GM12878 (cell line): ENCODE measurements at regions of chr19 and their contacts with region 1.

Region 1: GRCh38 chr19:46661020-46661731 is at the start of gene DACT3:
- DNase-seq: peak; percentile 99
- ATAC-seq: peak; percentile 97
- H3K4me3 ChIP-seq: peak within 1 kb of the TSS; percentile 59
- H3K27ac ChIP-seq: no peak within 1 kb of the TSS; the same call in 1 of the 2 replicates
- H3K4me1 ChIP-seq: peaks cover 22% of the 10 kb centered on the region
- H3K27me3 ChIP-seq: peaks cover 3% of the 10 kb centered on the region in 2 experiments; a peak in 3 of 4 replicates
- CTCF ChIP-seq: no peak
- EP300 ChIP-seq: no peak
- POLR2A ChIP-seq: no peak
- RAD21 ChIP-seq: no peak
- polyA plus RNA-seq, gene DACT3: 0.11 to 0.16 TPM

Region 2: GRCh38 chr19:46600384-46601317 is 60.5 kb before region 1 on chr19:
- CTCF ChIA-PET with region 1: interaction called, 38 read pairs
- POLR2A ChIA-PET with region 1: interaction called, 12 read pairs
- RAD21 ChIA-PET with region 1: interaction called, 47 read pairs
- SMC1A ChIA-PET with region 1: interaction called, 25 read pairs
- in situ Hi-C with region 1: no loop called
- intact Hi-C with region 1: no loop called
- DNase-seq: peak; percentile 85
- ATAC-seq: peak; percentile 81
- H3K4me3 ChIP-seq: peak overlapping the region; percentile 72
- H3K27ac ChIP-seq: peak overlapping the region; percentile 98
- H3K4me1 ChIP-seq: peaks cover 12% of the 10 kb centered on the region
- H3K27me3 ChIP-seq: no peaks in the 10 kb centered on the region
- CTCF ChIP-seq: no peak
- EP300 ChIP-seq: peak in 1 of 2 experiments; percentile 17; a peak in 1 of 4 replicates
- POLR2A ChIP-seq: peak; percentile 91
- RAD21 ChIP-seq: no peak

Region 3: GRCh38 chr19:46624958-46625661 is 36.1 kb before region 1 on chr19 and contains the start of gene PTGIR:
- CTCF ChIA-PET with region 1: interaction called, 434 read pairs
- POLR2A ChIA-PET with region 1: interaction called, 30 read pairs
- RAD21 ChIA-PET with region 1: interaction called, 245 read pairs
- SMC1A ChIA-PET with region 1: interaction called, 286 read pairs
- in situ Hi-C with region 1: no loop called
- intact Hi-C with region 1: no loop called
- DNase-seq: no peak
- ATAC-seq: peak; percentile 70
- H3K4me3 ChIP-seq: peak within 1 kb of the TSS; percentile 71
- H3K27ac ChIP-seq: peak within 1 kb of the TSS; percentile 62
- H3K4me1 ChIP-seq: peaks cover 36% of the 10 kb centered on the region
- H3K27me3 ChIP-seq: no peaks in the 10 kb centered on the region
- CTCF ChIP-seq: no peak
- EP300 ChIP-seq: no peak
- POLR2A ChIP-seq: peak; percentile 62
- RAD21 ChIP-seq: no peak
- polyA plus RNA-seq, gene PTGIR: 0.34 to 1.5 TPM

Region 4: DNA sequence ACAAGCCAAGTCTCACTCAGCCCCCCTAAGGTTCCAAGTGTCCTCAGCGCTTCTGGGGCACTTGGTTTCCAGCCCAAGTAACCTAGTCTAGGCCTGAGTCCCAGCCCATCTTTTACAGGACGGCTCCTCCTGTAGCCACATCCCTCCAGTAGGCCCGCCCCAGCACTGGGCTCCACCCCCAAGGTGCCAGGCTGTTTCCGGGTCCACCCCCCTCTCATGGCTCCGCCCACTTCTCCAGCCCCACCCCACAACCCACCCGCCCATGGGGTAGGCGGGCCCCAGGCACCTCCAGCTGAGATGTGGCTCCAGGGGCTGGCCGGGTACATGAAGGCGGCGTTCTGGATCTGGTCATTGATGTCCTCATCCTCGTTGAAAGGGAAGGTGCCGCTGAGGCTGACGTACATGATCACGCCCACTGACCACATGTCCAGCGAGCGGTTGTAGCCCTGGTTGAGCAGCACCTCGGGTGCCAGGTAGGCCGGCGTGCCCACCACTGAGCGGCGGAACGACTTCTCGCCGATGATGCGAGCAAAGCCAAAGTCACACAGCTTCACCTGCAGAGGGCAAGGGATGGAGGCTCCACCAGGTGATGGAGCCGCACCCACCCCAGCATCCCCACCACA is 17.0 kb after region 1 on chr19:
- CTCF ChIA-PET with region 1: interaction called, 16 read pairs
- POLR2A ChIA-PET with region 1: no interaction called
- RAD21 ChIA-PET with region 1: interaction called, 6 read pairs
- SMC1A ChIA-PET with region 1: no interaction called
- in situ Hi-C with region 1: no loop called
- intact Hi-C with region 1: no loop called
- DNase-seq: no peak
- ATAC-seq: peak; percentile 99
- H3K4me3 ChIP-seq: no peak overlapping the region
- H3K27ac ChIP-seq: no peak overlapping the region
- H3K4me1 ChIP-seq: no peaks in the 10 kb centered on the region
- H3K27me3 ChIP-seq: no peaks in the 10 kb centered on the region
- CTCF ChIP-seq: no peak
- EP300 ChIP-seq: no peak
- POLR2A ChIP-seq: no peak
- RAD21 ChIP-seq: no peak

Region 5: DNA sequence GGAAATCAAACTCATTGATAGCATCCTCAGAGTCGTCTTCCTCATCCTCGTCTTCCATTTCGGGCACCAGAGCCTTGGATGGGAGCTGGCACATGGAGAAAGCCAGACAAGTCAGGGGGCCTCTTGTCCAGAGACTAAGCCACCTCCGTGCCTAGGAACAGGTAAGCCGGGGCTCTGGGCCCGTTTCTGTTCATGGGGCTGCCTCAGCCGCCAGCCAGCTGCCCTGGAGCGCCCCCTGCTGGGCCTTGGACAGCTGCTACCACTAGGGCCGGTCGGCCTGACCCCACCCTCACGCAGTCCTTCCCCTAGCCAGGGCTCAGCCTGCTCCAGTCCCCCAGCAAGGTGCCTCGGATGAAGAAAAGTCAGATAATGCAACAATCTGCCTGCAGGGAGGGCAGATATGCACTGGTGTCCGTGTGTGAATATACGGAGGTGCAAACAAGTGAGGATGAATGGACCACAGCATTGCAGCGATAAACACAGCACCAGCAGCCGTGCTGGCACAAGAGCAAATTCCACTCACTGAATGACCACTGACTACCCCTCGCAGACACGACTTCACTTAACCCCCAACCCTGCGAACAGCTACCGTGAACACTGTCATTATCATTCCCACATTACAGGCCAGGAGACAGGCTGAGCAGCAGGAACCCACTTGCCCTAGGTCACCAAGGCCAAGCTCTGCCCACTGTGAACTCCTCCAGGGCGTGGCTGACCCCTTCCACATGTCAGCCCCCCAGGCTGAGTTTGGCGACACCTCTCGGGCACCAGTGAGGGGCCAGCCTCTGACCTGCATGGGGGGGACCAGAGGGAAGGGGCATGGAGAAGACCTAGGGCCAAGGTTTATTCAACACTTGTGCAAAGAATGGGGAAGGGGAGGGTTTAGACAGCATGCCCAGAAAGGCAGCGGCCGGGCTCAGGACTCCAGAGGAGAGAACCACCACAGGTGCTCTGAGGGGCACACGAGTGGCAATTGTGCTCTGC is 67.8 kb after region 1 on chr19:
- CTCF ChIA-PET with region 1: interaction called, 11 read pairs
- POLR2A ChIA-PET with region 1: interaction called, 6 read pairs
- RAD21 ChIA-PET with region 1: interaction called, 11 read pairs
- SMC1A ChIA-PET with region 1: interaction called, 7 read pairs
- in situ Hi-C with region 1: no loop called
- intact Hi-C with region 1: no loop called
- DNase-seq: no peak
- ATAC-seq: peak; percentile 97
- H3K4me3 ChIP-seq: no peak overlapping the region
- H3K27ac ChIP-seq: no peak overlapping the region
- H3K4me1 ChIP-seq: peaks cover 10% of the 10 kb centered on the region
- H3K27me3 ChIP-seq: no peaks in the 10 kb centered on the region
- CTCF ChIP-seq: peak; percentile 85 to 96 (median 91)
- EP300 ChIP-seq: no peak
- POLR2A ChIP-seq: peak; percentile 32
- RAD21 ChIP-seq: peak; percentile 75